ENCODE measurements at regions of chr2 and their contacts with region 1.

Region 1: GRCh38 chr2:88159955-88160415 is 10.2 kb upstream of the THNSL2 start:
- DNase-seq: peak in 1 of 2 donors; percentile 64
- ATAC-seq: peak in 6 of 8 donors; percentile 59 to 74 (median 64)
- H3K4me3 ChIP-seq: no peak overlapping the region
- H3K27ac ChIP-seq: no peak overlapping the region
- H3K4me1 ChIP-seq: no peaks in the 10 kb centered on the region
- H3K27me3 ChIP-seq: no peaks in the 10 kb centered on the region
- CTCF ChIP-seq: peak; percentile 72 to 93 (median 86)

Region 2: DNA sequence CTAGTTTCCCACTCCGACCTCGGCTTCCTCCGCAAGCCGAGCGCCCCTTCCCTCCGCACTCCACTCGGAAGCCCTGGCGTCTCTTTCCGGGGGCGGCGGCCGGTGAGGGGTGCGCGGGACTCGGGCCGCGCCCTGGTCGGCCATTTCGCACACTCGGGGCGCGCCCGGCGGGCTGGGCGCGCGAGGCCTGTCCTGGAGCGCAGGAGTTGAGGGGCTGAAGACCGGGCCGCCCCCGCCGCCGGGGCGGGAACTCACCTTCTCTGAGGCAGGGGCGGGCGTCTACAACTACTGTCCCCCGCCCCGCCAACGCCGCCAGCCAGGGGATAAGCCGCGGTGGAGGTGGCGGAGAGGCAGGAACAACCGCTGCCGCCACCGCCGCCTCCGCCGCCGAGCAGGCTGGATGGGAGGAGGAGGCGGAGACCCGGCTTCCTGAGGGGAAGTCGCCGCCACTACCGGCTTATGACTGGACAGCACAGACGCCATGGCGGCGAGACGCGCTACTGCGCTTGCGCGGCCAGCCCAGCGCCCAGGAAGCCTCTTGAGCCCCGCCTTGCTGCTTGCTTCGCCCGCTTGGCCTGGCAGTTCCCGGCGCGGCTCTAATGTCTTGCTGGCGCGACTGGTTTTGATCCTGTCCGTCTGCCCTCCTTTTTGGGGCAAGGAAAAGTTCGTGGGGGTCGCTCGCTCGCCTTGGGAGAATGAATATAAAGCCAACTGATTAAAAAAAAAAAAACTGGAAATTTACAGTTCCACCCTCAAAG is 104.4 kb before region 1 on chr2 and contains the start of gene KRCC1:
- intact Hi-C with region 1: loop called in 9 of 10 experiments (anchors 1 to 5 kb)
- DNase-seq: peak; percentile 95 to 97
- ATAC-seq: peak; percentile 98 to 99 (median 99)
- H3K4me3 ChIP-seq: peak within 1 kb of the TSS; percentile 70 to 95 (median 86)
- H3K27ac ChIP-seq: peak within 1 kb of the TSS; percentile 90 to 100 (median 98)
- H3K4me1 ChIP-seq: peaks cover 0 to 45% (median 40%) of the 10 kb centered on the region in 9 donors
- H3K27me3 ChIP-seq: no peaks in the 10 kb centered on the region
- CTCF ChIP-seq: peak in 1 of 9 donors; percentile 36
- total RNA-seq, gene KRCC1: 20.1 to 26.7 (median 22.0) TPM

Region 3: GRCh38 chr2:88060907-88061275 is 99.1 kb before region 1 on chr2:
- intact Hi-C with region 1: loop called (anchors 1 to 5 kb)
- DNase-seq: no peak
- ATAC-seq: no peak
- H3K4me3 ChIP-seq: no peak overlapping the region
- H3K27ac ChIP-seq: no peak overlapping the region
- H3K4me1 ChIP-seq: peaks cover 0 to 5% (median 4%) of the 10 kb centered on the region in 9 donors
- H3K27me3 ChIP-seq: no peaks in the 10 kb centered on the region
- CTCF ChIP-seq: no peak

Region 4: GRCh38 chr2:88220718-88221117 is 60.7 kb after region 1 on chr2:
- intact Hi-C with region 1: no loop called
- DNase-seq: no peak
- ATAC-seq: no peak
- H3K4me3 ChIP-seq: no peak overlapping the region
- H3K27ac ChIP-seq: no peak overlapping the region
- H3K4me1 ChIP-seq: no peaks in the 10 kb centered on the region
- H3K27me3 ChIP-seq: peaks cover 0 to 24% (median 3%) of the 10 kb centered on the region in 7 donors
- CTCF ChIP-seq: no peak

Measured in heart right ventricle (tissue), 16 donors.